Panc1 (cell line): ENCODE measurements at regions of chr6 and their contacts with region 1.

Region 1: DNA sequence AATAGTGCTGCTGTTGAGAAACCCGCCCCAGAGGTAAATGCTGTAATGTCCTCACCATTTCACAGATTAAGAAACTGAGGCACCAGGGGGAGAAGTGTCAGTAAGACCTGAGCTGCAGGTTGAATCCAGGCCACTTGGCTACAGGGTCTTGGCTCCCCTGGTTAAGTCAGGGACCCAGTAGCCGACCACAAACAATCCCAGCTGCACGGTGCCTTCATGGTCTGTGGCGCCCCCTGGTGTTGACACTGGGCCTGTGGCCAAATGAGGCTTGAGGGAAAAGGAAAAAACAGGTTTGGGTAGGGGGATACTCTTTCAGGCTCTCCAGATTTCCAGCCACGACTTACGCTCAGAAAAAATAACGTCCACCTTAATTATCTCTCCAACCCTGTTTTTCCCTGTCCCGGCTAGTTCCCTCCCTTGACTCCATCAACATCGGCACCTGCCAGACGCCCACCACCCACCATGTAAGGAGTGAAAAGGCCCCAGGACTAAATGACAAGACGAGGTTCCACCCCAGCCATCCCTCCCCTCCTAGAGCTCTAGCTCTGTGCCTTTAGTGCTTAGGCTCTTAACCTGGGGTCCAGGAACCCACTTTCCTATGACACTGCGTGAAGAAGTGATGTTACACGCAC is 47.7 kb upstream of the POLR1H start:
- DNase-seq: no peak
- ATAC-seq: peak; percentile 75; the same call in 1 of the 2 replicates
- H3K4me3 ChIP-seq: no peak overlapping the region
- H3K27ac ChIP-seq: no peak overlapping the region
- H3K4me1 ChIP-seq: no peaks in the 10 kb centered on the region
- H3K27me3 ChIP-seq: no peaks in the 10 kb centered on the region
- CTCF ChIP-seq: peak; percentile 76

Region 2: DNA sequence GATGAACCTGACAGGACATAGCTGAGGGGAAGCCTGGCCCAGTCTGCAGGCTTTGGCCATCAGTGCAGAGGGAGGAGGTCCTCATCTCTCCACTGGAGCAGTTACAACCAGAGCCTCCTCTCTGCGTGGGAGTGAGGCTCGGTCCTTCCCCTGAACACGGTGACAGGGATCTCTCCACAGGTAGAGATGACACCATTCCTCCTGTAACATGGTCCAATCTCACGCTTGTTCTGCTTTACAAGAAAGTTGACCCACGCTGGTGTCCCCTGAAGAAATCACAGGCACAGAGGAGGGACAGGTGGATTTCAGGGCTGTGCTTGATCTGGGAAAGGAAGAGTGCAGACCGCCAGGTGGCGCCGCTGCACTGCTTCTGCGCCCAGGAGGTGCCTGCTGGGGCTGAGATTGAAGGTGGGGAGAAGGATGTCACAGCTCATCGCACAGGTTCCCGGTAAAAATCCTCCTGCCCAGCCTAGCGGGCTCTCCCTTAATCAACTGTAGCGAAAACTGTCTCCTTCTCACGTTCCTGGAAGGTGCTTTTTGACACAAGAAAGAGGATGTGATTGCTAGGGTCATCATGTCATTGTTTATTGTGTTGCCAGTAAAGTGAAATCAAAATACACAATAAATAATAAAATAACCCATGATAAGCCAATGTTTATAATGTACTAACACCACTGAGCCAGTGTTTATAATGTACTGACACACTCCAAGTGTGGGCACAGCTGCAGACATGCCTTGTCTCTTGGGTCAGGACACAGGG is 165.4 kb before region 1 on chr6:
- CTCF ChIA-PET with region 1: no interaction called
- POLR2A ChIA-PET with region 1: no interaction called
- in situ Hi-C with region 1: no loop called
- intact Hi-C with region 1: loop called (anchors 1 kb)
- DNase-seq: peak; percentile 51
- ATAC-seq: peak; percentile 98
- H3K4me3 ChIP-seq: peak overlapping the region in 1 of 2 experiments; percentile 15; a peak in 1 of 4 replicates
- H3K27ac ChIP-seq: no peak overlapping the region
- H3K4me1 ChIP-seq: no peaks in the 10 kb centered on the region; the same call in 1 of the 2 replicates
- H3K27me3 ChIP-seq: peaks cover 7% of the 10 kb centered on the region
- CTCF ChIP-seq: peak; percentile 95

Region 3: DNA sequence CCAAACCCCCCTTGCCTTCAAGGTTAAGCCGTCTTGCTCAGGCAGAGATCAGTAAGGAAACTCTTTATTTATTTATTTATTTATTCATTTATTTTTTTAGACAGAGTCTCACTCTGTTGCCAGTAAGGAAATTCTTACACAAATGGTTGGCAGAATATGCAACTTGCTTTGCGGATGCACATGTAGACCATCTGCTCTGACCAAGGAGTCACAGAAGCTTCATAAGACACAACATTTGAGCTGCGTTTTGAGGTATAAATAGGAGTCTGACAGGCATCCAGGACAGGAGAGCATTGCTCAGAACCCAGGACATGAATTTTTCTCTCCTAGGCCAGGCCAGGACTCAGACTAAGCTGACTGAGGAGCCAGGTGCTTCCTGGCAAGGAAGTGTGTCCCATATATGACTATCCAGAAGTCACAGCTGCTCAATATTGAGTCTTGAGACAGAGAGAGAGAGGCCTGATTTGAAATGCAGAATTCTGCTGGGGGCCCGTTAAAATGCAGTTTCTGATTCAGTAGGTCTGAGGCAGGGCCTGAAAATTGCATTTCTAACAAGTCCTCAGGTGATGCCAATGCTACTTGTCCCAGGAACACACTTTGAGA is 27.1 kb before region 1 on chr6:
- CTCF ChIA-PET with region 1: no interaction called
- POLR2A ChIA-PET with region 1: no interaction called
- in situ Hi-C with region 1: no loop called
- intact Hi-C with region 1: no loop called
- DNase-seq: no peak
- ATAC-seq: no peak
- H3K4me3 ChIP-seq: no peak overlapping the region
- H3K27ac ChIP-seq: no peak overlapping the region
- H3K4me1 ChIP-seq: no peaks in the 10 kb centered on the region
- H3K27me3 ChIP-seq: no peaks in the 10 kb centered on the region; the same call in 1 of the 2 replicates
- CTCF ChIP-seq: no peak

Region 4: GRCh38 chr6:30025186-30025585 is 11.8 kb after region 1 on chr6:
- CTCF ChIA-PET with region 1: no interaction called
- POLR2A ChIA-PET with region 1: no interaction called
- in situ Hi-C with region 1: no loop called
- intact Hi-C with region 1: no loop called
- DNase-seq: no peak
- ATAC-seq: no peak
- H3K4me3 ChIP-seq: no peak overlapping the region
- H3K27ac ChIP-seq: no peak overlapping the region
- H3K4me1 ChIP-seq: no peaks in the 10 kb centered on the region
- H3K27me3 ChIP-seq: no peaks in the 10 kb centered on the region
- CTCF ChIP-seq: no peak

Region 5: GRCh38 chr6:30192076-30192475 is 178.7 kb after region 1 on chr6:
- CTCF ChIA-PET with region 1: no interaction called
- POLR2A ChIA-PET with region 1: no interaction called
- in situ Hi-C with region 1: no loop called
- intact Hi-C with region 1: no loop called
- DNase-seq: no peak
- ATAC-seq: no peak
- H3K4me3 ChIP-seq: no peak overlapping the region
- H3K27ac ChIP-seq: no peak overlapping the region
- H3K4me1 ChIP-seq: no peaks in the 10 kb centered on the region
- H3K27me3 ChIP-seq: no peaks in the 10 kb centered on the region
- CTCF ChIP-seq: no peak